Esophagus muscularis mucosa (tissue), 4 donors: ENCODE measurements at regions of chr11 and their contacts with region 1.

Region 1: DNA sequence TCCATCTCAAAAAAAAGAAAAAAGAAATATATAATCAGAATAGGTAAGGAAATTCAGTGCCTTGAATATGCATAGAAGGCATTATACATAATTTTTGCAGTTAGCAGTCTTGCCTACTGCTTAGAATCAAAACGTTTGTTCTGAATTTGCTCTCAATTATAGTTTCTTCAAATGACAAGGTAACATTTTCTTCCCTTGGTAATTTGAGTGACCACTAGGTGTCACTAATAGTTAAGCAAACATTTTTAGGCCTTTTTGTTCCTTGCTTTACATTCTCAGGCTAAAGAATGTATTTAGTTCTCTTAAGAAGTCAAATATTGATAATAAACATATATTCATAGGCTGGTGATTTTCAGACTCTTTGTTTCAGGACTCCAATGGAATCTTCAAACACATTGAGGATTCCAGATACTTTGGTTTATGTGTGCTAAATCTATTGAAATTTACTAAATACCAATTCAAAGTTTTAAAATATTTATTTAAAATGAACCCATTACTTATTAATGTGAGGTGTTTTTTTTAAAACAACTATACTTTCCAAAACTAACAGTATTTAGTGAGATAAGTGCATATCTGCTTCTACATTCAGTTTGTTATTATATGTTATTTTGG is 55.0 kb upstream of the DEPDC7 start:
- DNase-seq: no peak
- H3K4me3 ChIP-seq: no peak overlapping the region
- H3K27ac ChIP-seq: no peak overlapping the region
- H3K4me1 ChIP-seq: no peaks in the 10 kb centered on the region
- H3K27me3 ChIP-seq: no peaks in the 10 kb centered on the region
- CTCF ChIP-seq: peak; percentile 61 to 72 (median 71)
- EP300 ChIP-seq: no peak
- POLR2A ChIP-seq: no peak

Region 2: GRCh38 chr11:33065445-33066178 is 105.0 kb after region 1 on chr11:
- intact Hi-C with region 1: loop called (anchors 2 kb)
- DNase-seq: no peak
- H3K4me3 ChIP-seq: no peak overlapping the region
- H3K27ac ChIP-seq: no peak overlapping the region
- H3K4me1 ChIP-seq: peaks cover 0 to 41% (median 36%) of the 10 kb centered on the region in 4 donors
- H3K27me3 ChIP-seq: no peaks in the 10 kb centered on the region
- CTCF ChIP-seq: peak; percentile 78 to 91 (median 81)
- EP300 ChIP-seq: no peak
- POLR2A ChIP-seq: no peak